ENCODE measurements at regions of chr19 and their contacts with region 1.

Region 1: DNA sequence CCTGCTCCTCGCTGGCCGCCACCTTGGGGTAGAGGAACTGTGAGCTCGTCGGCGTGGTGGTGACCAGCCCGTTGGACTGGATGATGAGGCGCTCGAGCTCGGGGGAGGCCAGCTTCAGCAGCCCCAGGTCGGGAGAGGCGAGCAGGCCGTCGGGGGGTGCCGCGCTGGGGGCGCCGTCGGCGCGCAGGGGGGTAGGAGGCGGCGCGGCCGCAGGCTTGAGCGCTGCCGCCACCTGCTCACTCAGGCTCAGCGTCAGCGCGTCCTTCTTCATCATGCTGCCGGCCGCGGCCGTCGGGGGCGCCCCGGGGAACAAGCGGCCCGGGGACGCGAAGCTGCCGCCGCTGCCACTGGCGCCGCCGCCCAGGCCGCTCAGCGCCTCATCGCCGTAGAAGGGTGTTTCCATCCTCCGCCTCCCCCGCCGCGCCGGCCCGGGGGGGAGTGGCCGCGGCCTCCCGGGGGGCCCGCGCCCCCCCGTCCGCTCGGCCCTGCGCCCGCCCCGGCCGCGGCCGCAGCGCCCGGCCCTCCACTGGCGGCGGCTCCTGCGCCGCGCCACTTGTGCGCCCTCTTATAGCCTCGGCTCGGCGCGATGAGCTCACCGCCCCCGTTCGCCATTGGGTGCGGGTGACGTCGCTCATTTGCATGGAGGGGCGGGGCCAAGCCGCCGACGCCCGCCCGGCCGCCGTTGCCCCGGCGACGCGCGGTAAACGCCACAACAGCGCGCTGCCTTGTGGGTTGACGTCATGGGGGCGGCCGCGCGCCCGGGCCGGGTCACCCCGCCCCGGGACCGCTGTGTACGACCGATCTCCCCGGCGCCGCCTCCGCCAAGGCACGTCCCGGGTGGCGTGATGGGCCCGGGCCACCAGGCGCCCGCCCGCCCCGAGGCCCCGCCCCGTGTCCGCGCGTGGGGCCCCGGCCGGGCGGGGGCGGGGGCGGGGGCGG is at the start of gene JUND:
- DNase-seq: peak; percentile 96 to 98
- H3K4me3 ChIP-seq: peak within 1 kb of the TSS; percentile 94
- H3K4me3 Mint-ChIP-seq: peak within 1 kb of the TSS; percentile 93
- H3K27ac Mint-ChIP-seq: peak within 1 kb of the TSS; percentile 99
- H3K4me1 ChIP-seq: peaks cover 23% of the 10 kb centered on the region
- H3K4me1 Mint-ChIP-seq: peaks cover 21% of the 10 kb centered on the region
- H3K27me3 ChIP-seq: no peaks in the 10 kb centered on the region
- H3K27me3 Mint-ChIP-seq: peaks cover 6% of the 10 kb centered on the region
- CTCF ChIP-seq: peak in 1 of 2 experiments; percentile 16
- total RNA-seq, gene JUND: 75.5 and 78.8 TPM in 2 replicates

Region 2: DNA sequence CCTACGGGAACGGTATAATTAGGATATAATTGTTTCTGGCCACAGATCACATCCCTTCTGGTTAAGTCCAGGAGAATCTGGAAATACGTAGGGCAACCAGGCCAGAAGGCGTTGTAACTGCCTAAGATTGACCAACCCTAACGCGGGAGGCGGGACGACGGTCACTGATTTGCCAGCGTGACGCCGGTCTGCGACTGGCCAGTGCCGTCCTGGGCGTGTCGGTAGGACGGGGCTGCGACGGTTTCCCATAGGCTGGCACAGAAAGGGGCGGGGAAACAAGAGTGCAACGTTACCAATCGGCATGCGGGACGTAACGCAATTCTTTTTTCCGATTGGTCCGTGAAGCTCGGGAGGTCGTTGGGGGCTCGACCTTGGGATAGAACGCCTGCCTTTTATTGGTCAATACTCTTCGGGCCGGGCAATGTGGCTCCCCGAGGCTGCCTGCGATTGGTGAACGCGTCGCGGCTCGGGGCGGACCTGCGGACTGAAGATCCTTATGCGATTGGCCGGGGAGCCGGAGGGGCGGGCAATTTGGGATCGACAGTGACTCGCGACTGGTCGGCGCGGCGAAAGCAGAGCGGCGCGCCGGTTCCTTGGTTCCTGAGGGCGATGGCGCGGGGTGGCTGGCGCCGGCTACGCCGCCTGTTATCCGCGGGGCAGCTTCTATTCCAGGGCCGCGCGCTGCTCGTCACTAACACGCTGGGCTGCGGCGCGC is 88.5 kb before region 1 on chr19 and contains the start of gene MPV17L2:
- CTCF ChIA-PET with region 1: interaction called, 7 read pairs
- POLR2A ChIA-PET with region 1: interaction called, 10 read pairs
- intact Hi-C with region 1: no loop called
- DNase-seq: peak; percentile 98 to 99
- H3K4me3 ChIP-seq: peak within 1 kb of the TSS; percentile 77
- H3K4me3 Mint-ChIP-seq: peak within 1 kb of the TSS; percentile 76
- H3K27ac Mint-ChIP-seq: peak within 1 kb of the TSS; percentile 69
- H3K4me1 ChIP-seq: peaks cover 4% of the 10 kb centered on the region; the same call in 1 of the 2 replicates
- H3K4me1 Mint-ChIP-seq: no peaks in the 10 kb centered on the region
- H3K27me3 ChIP-seq: no peaks in the 10 kb centered on the region
- H3K27me3 Mint-ChIP-seq: no peaks in the 10 kb centered on the region
- CTCF ChIP-seq: no peak
- total RNA-seq, gene MPV17L2: 14.1 and 16.6 TPM in 2 replicates

Region 3: GRCh38 chr19:18291590-18292461 is 10.5 kb after region 1 on chr19:
- CTCF ChIA-PET with region 1: interaction called, 82 read pairs
- POLR2A ChIA-PET with region 1: interaction called, 225 read pairs
- intact Hi-C with region 1: loop called (anchors 1 kb)
- DNase-seq: peak; percentile 82 to 90
- H3K4me3 ChIP-seq: peak overlapping the region; percentile 63
- H3K4me3 Mint-ChIP-seq: peak overlapping the region; percentile 71
- H3K27ac Mint-ChIP-seq: peak overlapping the region; percentile 92
- H3K4me1 ChIP-seq: peaks cover 18% of the 10 kb centered on the region
- H3K4me1 Mint-ChIP-seq: peaks cover 7% of the 10 kb centered on the region
- H3K27me3 ChIP-seq: no peaks in the 10 kb centered on the region
- H3K27me3 Mint-ChIP-seq: no peaks in the 10 kb centered on the region
- CTCF ChIP-seq: no peak

Region 4: GRCh38 chr19:18322759-18323460 is 41.6 kb after region 1 on chr19 and contains the start of gene LSM4:
- CTCF ChIA-PET with region 1: interaction called, 155 read pairs
- POLR2A ChIA-PET with region 1: interaction called, 123 read pairs
- intact Hi-C with region 1: loop called (anchors 1 kb)
- DNase-seq: peak; percentile 97 to 98
- H3K4me3 ChIP-seq: peak within 1 kb of the TSS; percentile 96
- H3K4me3 Mint-ChIP-seq: peak within 1 kb of the TSS; percentile 92
- H3K27ac Mint-ChIP-seq: peak within 1 kb of the TSS; percentile 97
- H3K4me1 ChIP-seq: peaks cover 32% of the 10 kb centered on the region
- H3K4me1 Mint-ChIP-seq: peaks cover 30% of the 10 kb centered on the region
- H3K27me3 ChIP-seq: no peaks in the 10 kb centered on the region
- H3K27me3 Mint-ChIP-seq: no peaks in the 10 kb centered on the region
- CTCF ChIP-seq: peak in 1 of 2 experiments; percentile 38
- total RNA-seq, gene LSM4: 184 and 186 TPM in 2 replicates

Region 5: GRCh38 chr19:18340190-18340989 is 59.0 kb after region 1 on chr19 and contains the start of gene PGPEP1:
- CTCF ChIA-PET with region 1: interaction called, 10 read pairs
- POLR2A ChIA-PET with region 1: interaction called, 5 read pairs
- intact Hi-C with region 1: no loop called
- DNase-seq: peak; percentile 57 to 82
- H3K4me3 ChIP-seq: peak within 1 kb of the TSS; percentile 71
- H3K4me3 Mint-ChIP-seq: peak within 1 kb of the TSS; percentile 70
- H3K27ac Mint-ChIP-seq: peak within 1 kb of the TSS; percentile 60
- H3K4me1 ChIP-seq: peaks cover 4% of the 10 kb centered on the region
- H3K4me1 Mint-ChIP-seq: peaks cover 7% of the 10 kb centered on the region
- H3K27me3 ChIP-seq: no peaks in the 10 kb centered on the region
- H3K27me3 Mint-ChIP-seq: no peaks in the 10 kb centered on the region
- CTCF ChIP-seq: no peak
- total RNA-seq, gene PGPEP1: 25.6 and 26.0 TPM in 2 replicates

Region 6: DNA sequence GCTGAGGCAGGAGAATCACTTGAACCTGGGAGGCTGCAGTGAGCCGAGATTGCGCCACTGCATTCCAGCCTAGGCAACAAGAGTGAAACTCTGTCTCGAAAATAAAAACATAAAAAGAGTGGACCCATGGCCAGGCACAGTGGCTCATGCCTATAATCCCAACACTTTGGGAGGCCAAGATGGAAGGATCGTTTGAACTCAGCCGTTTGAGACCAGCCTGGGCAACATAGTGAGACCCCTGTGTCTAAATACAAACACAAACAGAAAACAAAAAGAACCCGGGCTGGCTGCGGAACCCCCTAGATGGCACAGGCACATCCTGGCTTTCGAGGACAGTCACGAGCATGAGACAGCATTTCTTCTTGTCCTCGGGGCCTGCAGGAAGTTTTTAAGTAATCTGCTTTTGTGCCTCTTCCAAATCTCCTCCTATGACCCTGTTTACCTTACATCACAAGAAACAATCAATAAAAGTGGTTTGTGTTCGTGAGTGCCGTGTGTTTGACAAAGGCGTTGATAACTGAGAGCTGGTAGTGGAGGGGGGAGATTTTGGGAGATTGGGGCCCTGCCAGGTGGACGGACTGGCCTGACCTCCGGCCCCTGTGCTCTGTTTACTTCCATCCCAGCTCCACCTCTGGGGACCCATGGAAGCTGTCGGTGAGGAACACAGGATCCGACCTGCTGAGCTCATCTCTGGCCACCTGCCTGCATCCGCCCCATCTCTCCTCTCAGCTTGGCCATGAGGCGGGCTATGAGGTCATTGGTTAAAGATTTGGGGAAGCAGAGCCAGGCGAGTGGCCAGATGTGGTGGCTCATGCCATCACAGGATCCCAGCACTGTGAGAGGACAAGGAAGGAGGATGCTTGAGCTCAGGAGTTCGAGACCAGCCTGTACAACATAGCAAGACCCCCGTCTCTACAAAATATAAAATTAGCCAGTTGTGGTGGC is 98.7 kb after region 1 on chr19:
- CTCF ChIA-PET with region 1: interaction called, 3 read pairs
- POLR2A ChIA-PET with region 1: interaction called, 13 read pairs
- intact Hi-C with region 1: no loop called
- DNase-seq: peak; percentile 90 to 93
- H3K4me3 ChIP-seq: no peak overlapping the region
- H3K4me3 Mint-ChIP-seq: peak overlapping the region; percentile 8
- H3K27ac Mint-ChIP-seq: peak overlapping the region; percentile 95
- H3K4me1 ChIP-seq: peaks cover 80% of the 10 kb centered on the region
- H3K4me1 Mint-ChIP-seq: peaks cover 7% of the 10 kb centered on the region
- H3K27me3 ChIP-seq: no peaks in the 10 kb centered on the region
- H3K27me3 Mint-ChIP-seq: no peaks in the 10 kb centered on the region
- CTCF ChIP-seq: no peak

Region 7: DNA sequence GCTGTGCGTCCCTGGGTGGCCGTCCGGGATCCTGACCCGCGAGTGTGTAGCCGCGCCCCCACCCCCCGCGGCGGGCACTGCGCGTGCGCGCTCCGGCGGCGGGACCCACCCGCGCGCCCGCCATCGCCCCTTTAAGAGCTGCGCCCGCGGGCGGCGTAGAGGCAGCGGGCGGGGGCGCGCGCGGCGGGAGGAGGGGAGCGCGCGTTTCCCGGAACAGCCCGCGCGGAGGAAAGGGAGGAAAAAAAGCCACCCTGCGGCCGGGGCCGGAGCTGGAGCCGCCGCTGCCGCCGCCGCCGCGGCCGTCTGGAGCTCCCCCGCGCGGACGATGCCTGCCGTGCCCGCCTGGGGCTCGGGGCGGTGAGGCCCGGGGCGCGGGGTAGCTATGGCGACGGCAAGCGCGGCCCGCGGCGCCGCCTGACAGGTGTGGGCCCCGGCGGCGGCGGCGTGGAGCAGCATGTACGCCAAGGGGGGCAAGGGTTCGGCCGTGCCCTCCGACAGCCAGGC is 137.9 kb after region 1 on chr19 and contains the start of gene SSBP4:
- CTCF ChIA-PET with region 1: interaction called, 15 read pairs
- POLR2A ChIA-PET with region 1: interaction called, 32 read pairs
- intact Hi-C with region 1: no loop called
- DNase-seq: peak; percentile 77 to 90
- H3K4me3 ChIP-seq: peak within 1 kb of the TSS; percentile 85
- H3K4me3 Mint-ChIP-seq: peak within 1 kb of the TSS; percentile 89
- H3K27ac Mint-ChIP-seq: peak within 1 kb of the TSS; percentile 24
- H3K4me1 ChIP-seq: peaks cover 41% of the 10 kb centered on the region
- H3K4me1 Mint-ChIP-seq: peaks cover 7% of the 10 kb centered on the region
- H3K27me3 ChIP-seq: no peaks in the 10 kb centered on the region
- H3K27me3 Mint-ChIP-seq: no peaks in the 10 kb centered on the region
- CTCF ChIP-seq: peak; percentile 22 to 39
- total RNA-seq, gene SSBP4: 46.2 and 49.4 TPM in 2 replicates

Measured in Caco-2 (cell line).